Activated B cell treated with CpG ODN at 0.5 μM for 24 hours (primary cell): ENCODE measurements at regions of chr22 and their contacts with region 1.

Region 1: GRCh38 chr22:37658133-37659065 is at the start of gene PDXP:
- DNase-seq: peak; percentile 96
- ATAC-seq: peak; percentile 92
- H3K4me3 Mint-ChIP-seq: peak within 1 kb of the TSS; percentile 93
- H3K27ac Mint-ChIP-seq: peak within 1 kb of the TSS; percentile 99
- H3K4me1 Mint-ChIP-seq: peaks cover 47% of the 10 kb centered on the region
- H3K27me3 Mint-ChIP-seq: no peaks in the 10 kb centered on the region
- CTCF ChIP-seq: no peak
- total RNA-seq, gene PDXP: 17.7 and 22.6 TPM in 2 replicates

Region 2: DNA sequence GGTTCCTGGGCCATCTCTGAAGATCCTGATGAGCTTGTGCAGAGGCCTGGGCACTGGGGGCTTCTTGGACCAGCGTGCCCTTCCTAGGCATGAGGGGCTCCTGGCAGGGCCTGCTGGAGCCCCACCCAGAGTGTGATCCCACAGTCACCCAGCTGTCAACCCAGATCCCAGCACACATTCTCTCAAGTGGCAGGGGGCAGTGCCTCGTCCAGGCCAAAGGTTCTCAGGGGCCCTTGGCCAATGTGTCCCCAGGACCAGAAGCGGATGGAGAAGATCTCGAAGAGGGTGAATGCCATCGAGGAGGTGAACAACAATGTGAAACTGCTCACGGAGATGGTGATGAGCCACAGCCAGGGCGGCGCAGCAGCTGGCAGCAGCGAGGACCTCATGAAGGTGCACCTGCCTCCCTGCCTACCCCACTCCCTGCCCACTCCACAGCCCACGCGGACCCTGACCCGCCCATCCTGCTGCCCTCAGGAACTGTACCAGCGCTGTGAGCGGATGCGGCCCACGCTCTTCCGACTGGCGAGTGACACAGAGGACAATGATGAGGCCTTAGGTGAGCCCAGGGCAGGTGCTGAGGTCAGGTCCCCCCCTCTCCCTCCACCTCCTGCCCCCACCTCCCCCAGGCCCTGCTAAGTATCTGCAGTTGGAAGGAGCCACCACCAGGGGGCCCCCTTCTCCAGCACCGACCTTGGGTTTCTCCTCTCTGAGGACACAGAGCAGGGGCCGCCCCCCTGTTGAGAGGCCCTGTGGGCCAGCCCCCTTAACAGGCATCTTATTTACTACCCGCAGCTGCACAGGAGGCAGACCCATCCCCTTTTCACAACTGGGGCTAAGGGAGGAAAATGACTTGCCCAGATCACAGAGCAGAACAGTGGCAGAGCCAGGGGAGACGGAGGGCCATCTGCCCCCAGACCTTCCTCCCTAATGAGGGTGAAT is 35.1 kb before region 1 on chr22:
- CTCF ChIA-PET with region 1: interaction called, 8 read pairs
- POLR2A ChIA-PET with region 1: interaction called, 44 read pairs
- intact Hi-C with region 1: no loop called
- DNase-seq: peak; percentile 73
- ATAC-seq: peak; percentile 80
- H3K4me3 Mint-ChIP-seq: peak overlapping the region; percentile 24
- H3K27ac Mint-ChIP-seq: peak overlapping the region; percentile 84
- H3K4me1 Mint-ChIP-seq: peaks cover 64% of the 10 kb centered on the region
- H3K27me3 Mint-ChIP-seq: no peaks in the 10 kb centered on the region
- CTCF ChIP-seq: peak; percentile 38

Region 3: GRCh38 chr22:37643225-37643847 is 15.1 kb before region 1 on chr22:
- CTCF ChIA-PET with region 1: interaction called, 58 read pairs
- POLR2A ChIA-PET with region 1: interaction called, 55 read pairs
- intact Hi-C with region 1: loop called (anchors 1 kb)
- DNase-seq: peak; percentile 85
- ATAC-seq: peak; percentile 80
- H3K4me3 Mint-ChIP-seq: peak overlapping the region; percentile 28
- H3K27ac Mint-ChIP-seq: peak overlapping the region; percentile 59
- H3K4me1 Mint-ChIP-seq: peaks cover 34% of the 10 kb centered on the region
- H3K27me3 Mint-ChIP-seq: no peaks in the 10 kb centered on the region
- CTCF ChIP-seq: peak; percentile 64

Region 4: DNA sequence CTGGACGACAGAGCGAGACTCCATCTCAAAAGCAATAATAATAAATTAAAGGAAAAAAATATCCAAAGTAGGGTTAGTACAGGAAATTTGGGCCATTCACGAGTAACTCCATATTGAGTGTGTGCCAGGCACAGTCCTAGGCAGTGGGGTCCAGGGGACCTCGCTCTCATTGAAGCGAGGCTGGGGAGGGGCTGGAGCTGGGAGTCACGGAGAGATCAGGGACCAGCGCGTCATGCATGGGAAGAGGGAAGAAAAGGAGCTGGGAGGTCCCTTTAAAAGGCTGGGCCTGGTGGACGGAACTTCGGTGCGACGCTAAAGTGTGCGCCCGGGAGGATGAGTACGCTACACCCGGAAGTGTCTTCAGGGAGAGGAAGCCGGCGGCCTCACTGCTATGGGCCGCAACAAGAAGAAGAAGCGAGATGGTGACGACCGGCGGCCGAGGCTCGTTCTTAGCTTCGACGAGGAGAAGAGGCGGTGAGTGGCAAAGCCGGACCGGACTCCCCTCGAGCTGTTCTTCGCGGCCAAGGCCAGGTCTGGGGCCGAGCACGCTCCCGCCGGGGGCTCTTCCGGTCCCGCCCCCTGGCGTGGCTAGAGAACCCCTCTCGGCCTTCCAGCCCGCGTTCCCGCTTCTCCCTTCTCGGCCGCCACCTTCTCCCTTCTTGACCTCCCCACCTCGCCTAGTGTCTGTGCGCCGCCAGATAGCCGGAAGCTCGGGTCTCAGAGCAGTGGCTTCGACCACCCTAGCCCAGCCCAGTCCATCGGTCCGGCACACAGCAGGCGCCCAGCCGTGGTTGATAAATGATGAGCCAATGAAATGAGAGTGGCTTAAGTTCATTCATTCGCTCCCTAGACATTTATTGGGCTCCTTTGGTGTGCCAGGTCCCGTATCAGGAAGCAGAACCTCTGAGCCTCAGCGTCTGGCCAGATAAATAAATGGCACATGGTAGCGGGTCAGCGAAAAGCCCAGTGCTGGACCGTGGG is 27.9 kb after region 1 on chr22 and contains the start of gene NOL12:
- CTCF ChIA-PET with region 1: interaction called, 107 read pairs
- POLR2A ChIA-PET with region 1: interaction called, 38 read pairs
- intact Hi-C with region 1: loop called (anchors 1 kb)
- DNase-seq: peak; percentile 79
- ATAC-seq: peak; percentile 87
- H3K4me3 Mint-ChIP-seq: peak within 1 kb of the TSS; percentile 97
- H3K27ac Mint-ChIP-seq: peak within 1 kb of the TSS; percentile 95
- H3K4me1 Mint-ChIP-seq: peaks cover 35% of the 10 kb centered on the region
- H3K27me3 Mint-ChIP-seq: no peaks in the 10 kb centered on the region
- CTCF ChIP-seq: no peak
- total RNA-seq, gene NOL12: 39.0 and 39.8 TPM in 2 replicates

Region 5: DNA sequence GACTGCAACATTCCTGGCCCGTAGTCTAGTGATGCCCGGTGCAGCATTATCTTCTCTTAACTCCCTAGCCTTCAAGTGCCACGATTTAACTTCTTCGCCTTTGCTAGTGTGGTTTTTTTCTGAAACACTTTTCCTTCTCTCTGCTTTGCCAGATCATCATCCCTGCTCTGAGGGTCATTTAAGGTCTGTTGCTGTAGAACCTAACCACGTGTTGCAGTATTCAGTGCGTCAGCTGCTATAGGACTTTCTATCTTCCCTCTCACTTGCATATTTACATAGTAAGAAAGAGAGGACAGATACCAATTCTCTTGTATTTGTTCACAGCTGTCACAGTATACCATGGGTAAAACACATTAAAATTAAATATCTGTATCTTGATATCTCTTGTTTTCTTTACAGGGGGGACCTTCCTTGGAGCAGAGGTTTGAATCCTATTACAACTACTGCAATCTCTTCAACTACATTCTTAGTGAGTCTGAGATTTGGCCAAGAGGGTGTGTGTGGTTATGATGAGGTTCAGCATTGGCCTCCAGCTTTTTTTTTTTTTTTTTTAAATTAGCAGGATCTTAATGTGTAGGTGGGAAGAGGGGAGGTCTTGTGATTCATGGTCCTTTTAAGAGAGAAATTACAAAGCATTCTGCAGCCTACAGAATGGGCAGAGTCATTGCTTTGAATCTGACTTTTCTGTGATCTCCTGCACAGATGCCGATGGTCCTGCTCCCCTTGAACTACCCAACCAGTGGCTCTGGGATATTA is 204.3 kb after region 1 on chr22:
- CTCF ChIA-PET with region 1: interaction called, 10 read pairs
- POLR2A ChIA-PET with region 1: no interaction called
- intact Hi-C with region 1: loop called (anchors 1 kb)
- DNase-seq: no peak
- ATAC-seq: no peak
- H3K4me3 Mint-ChIP-seq: no peak overlapping the region
- H3K27ac Mint-ChIP-seq: no peak overlapping the region
- H3K4me1 Mint-ChIP-seq: no peaks in the 10 kb centered on the region
- H3K27me3 Mint-ChIP-seq: no peaks in the 10 kb centered on the region
- CTCF ChIP-seq: no peak